IMR-90 (cell line): ENCODE measurements at regions of chr1 and their contacts with region 1.

Region 1: GRCh38 chr1:65431111-65431705 is 10.7 kb downstream of the LEPR start:
- DNase-seq: peak; percentile 55
- ATAC-seq: peak; percentile 53
- H3K4me3 ChIP-seq: no peak overlapping the region
- H3K27ac ChIP-seq: no peak overlapping the region
- H3K4me1 ChIP-seq: peaks cover 2% of the 10 kb centered on the region; the same call in 1 of the 2 replicates
- H3K27me3 ChIP-seq: no peaks in the 10 kb centered on the region
- CTCF ChIP-seq: peak; percentile 59
- POLR2A ChIP-seq: no peak
- RAD21 ChIP-seq: peak; percentile 62

Region 2: DNA sequence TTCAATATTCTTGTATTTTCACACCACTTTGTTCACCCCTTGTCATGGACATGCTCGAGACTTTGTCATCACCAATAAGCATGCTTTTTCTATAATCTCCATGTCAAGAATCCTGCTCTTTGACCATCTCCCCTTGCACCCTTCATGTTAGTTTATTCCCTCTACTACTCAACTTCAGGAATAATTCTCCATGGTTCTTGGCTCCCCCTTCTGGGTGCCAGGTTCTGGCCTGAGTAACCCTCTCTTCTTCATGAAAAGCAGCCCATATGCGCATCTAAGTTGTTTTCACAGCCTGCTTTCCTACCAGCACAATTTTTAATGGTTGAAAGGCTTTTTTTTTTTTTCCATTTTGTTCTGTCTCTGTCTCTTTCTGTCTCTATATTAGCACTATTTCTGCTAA is 149.9 kb after region 1 on chr1:
- CTCF ChIA-PET with region 1: interaction called, 3 read pairs
- POLR2A ChIA-PET with region 1: no interaction called
- dilution Hi-C with region 1: no loop called
- in situ Hi-C with region 1: no loop called
- intact Hi-C with region 1: loop called (anchors 1 kb)
- DNase-seq: no peak
- ATAC-seq: no peak; the same call in 1 of the 2 replicates
- H3K4me3 ChIP-seq: no peak overlapping the region
- H3K27ac ChIP-seq: no peak overlapping the region
- H3K4me1 ChIP-seq: no peaks in the 10 kb centered on the region
- H3K27me3 ChIP-seq: no peaks in the 10 kb centered on the region
- CTCF ChIP-seq: peak; percentile 29; the same call in 1 of the 2 replicates
- POLR2A ChIP-seq: no peak
- RAD21 ChIP-seq: no peak

Region 3: DNA sequence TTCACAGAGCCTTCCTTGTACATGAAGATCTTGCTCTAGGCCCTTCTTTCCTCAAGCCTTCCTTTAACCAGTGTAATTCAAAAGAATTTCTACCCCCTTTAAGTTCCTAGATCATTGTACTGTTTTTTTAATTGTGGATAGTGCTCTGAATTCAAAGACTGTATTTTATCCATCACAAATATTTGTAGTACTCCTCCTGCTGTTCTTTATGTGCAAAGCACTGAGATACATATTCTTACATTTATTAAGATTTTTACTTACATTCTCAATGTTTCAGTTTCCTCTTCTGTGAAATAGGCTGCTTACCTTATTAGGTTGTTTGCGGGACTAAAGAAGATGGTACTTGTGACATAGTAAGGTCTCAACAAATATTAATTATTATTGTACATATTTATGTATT is 192.7 kb after region 1 on chr1:
- CTCF ChIA-PET with region 1: no interaction called
- POLR2A ChIA-PET with region 1: no interaction called
- dilution Hi-C with region 1: no loop called
- in situ Hi-C with region 1: no loop called
- intact Hi-C with region 1: loop called (anchors 5 kb)
- DNase-seq: no peak
- ATAC-seq: no peak
- H3K4me3 ChIP-seq: no peak overlapping the region
- H3K27ac ChIP-seq: no peak overlapping the region
- H3K4me1 ChIP-seq: no peaks in the 10 kb centered on the region
- H3K27me3 ChIP-seq: no peaks in the 10 kb centered on the region
- CTCF ChIP-seq: peak; percentile 27; the same call in 1 of the 2 replicates
- POLR2A ChIP-seq: no peak
- RAD21 ChIP-seq: no peak

Region 4: GRCh38 chr1:66300972-66301451 is 869.8 kb after region 1 on chr1:
- CTCF ChIA-PET with region 1: no interaction called
- POLR2A ChIA-PET with region 1: no interaction called
- dilution Hi-C with region 1: no loop called
- in situ Hi-C with region 1: no loop called
- intact Hi-C with region 1: no loop called
- DNase-seq: peak; percentile 59
- ATAC-seq: peak; percentile 72
- H3K4me3 ChIP-seq: peak overlapping the region; percentile 22; the same call in 1 of the 2 replicates
- H3K27ac ChIP-seq: peak overlapping the region; percentile 28
- H3K4me1 ChIP-seq: no peaks in the 10 kb centered on the region; the same call in 1 of the 2 replicates
- H3K27me3 ChIP-seq: no peaks in the 10 kb centered on the region
- CTCF ChIP-seq: no peak
- POLR2A ChIP-seq: no peak
- RAD21 ChIP-seq: no peak